B cell (primary cell): ENCODE measurements at regions of chr16 and their contacts with region 1.

Region 1: DNA sequence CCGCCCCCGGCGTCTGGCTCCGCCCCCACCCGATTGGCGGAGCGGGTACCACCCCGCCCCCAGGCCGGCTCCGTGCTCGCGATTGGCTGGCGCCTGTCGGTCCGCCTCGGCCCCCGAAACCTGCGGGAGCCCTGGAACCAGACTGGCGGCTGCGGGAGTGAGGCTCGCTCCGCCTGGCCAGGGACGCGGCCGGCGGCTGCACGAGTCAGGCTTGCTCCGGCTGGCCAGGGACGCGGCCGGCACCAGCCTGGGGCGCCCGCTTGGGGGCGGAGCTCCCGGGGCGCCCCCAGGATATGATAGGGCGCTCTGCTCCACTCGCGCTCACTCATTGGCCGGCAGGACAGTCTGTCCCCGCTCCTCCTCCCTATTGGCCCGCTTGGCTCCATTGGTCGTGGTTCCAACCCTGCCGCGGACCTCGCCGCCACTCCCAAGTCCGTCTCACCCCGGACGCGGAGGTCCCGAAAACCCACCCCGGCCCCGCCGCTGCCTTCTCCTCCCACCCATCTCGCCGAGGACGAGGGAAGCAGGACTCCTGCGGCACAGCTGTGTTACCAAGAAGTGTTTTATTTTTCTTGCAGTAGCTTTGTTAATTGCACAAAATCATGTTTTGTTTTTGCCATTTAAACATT is 340 bp upstream of the ROGDI start:
- DNase-seq: peak; percentile 95
- ATAC-seq: peak; percentile 86
- H3K4me3 ChIP-seq: peak overlapping the region; percentile 13 to 88 (median 75)
- H3K4me3 Mint-ChIP-seq: peak overlapping the region; percentile 88
- H3K27ac ChIP-seq: peak overlapping the region; percentile 47 to 77
- H3K27ac Mint-ChIP-seq: peak overlapping the region; percentile 84
- H3K4me1 ChIP-seq: peaks cover 26 to 27% of the 10 kb centered on the region in 2 donors
- H3K4me1 Mint-ChIP-seq: peaks cover 21% of the 10 kb centered on the region
- H3K27me3 ChIP-seq: no peaks in the 10 kb centered on the region
- H3K27me3 Mint-ChIP-seq: no peaks in the 10 kb centered on the region
- CTCF ChIP-seq: no peak

Region 2: DNA sequence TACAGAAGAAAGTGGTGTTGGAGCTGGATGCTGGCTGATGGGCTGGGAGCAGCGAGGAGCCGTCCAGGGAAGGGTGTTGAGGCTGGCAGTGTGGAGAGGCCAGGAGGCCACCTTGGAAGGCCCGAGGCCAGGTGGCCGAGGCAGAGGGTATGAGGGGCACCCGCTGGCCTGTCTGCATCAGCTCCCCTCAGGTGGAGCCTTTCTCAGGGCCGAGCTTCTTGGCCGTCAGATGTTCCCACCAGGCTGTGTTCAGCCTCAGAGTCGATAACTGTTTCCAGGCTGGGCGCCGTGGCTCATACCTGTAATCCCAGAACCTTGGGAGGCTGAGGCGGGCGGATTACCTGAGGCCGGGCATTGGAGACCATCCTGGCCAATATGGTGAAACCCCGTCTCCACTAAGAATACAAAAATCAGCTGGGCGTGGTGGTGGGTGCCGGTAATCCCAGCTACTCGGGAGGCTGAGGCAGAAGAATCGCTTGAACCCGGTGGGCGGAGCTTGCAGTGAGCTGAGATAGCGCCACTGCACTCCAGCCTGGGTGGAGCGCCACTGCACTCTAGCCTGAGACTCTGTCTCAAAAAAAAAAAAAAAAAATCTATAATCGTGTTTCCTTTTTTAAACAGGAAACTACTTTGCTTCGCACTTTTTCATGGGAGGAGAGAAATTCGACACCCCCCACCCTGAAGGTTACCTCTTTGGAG is 152.9 kb before region 1 on chr16:
- CTCF ChIA-PET with region 1: no interaction called
- POLR2A ChIA-PET with region 1: no interaction called
- intact Hi-C with region 1: no loop called
- DNase-seq: no peak
- ATAC-seq: no peak
- H3K4me3 ChIP-seq: no peak overlapping the region
- H3K4me3 Mint-ChIP-seq: no peak overlapping the region
- H3K27ac ChIP-seq: no peak overlapping the region
- H3K27ac Mint-ChIP-seq: no peak overlapping the region
- H3K4me1 ChIP-seq: peaks cover 0 to 20% of the 10 kb centered on the region in 2 donors
- H3K4me1 Mint-ChIP-seq: peaks cover 23% of the 10 kb centered on the region
- H3K27me3 ChIP-seq: no peaks in the 10 kb centered on the region
- H3K27me3 Mint-ChIP-seq: no peaks in the 10 kb centered on the region
- CTCF ChIP-seq: no peak

Region 3: GRCh38 chr16:4693296-4693955 is 109.3 kb before region 1 on chr16 and contains the start of gene NUDT16L1:
- CTCF ChIA-PET with region 1: no interaction called
- POLR2A ChIA-PET with region 1: no interaction called
- intact Hi-C with region 1: loop called (anchors 1 kb)
- DNase-seq: peak; percentile 97
- ATAC-seq: peak; percentile 95
- H3K4me3 ChIP-seq: peak within 1 kb of the TSS; percentile 50 to 85 (median 81)
- H3K4me3 Mint-ChIP-seq: peak within 1 kb of the TSS; percentile 91
- H3K27ac ChIP-seq: peak within 1 kb of the TSS; percentile 34 to 87
- H3K27ac Mint-ChIP-seq: peak within 1 kb of the TSS; percentile 90
- H3K4me1 ChIP-seq: peaks cover 15 to 19% of the 10 kb centered on the region in 2 donors
- H3K4me1 Mint-ChIP-seq: peaks cover 22% of the 10 kb centered on the region
- H3K27me3 ChIP-seq: no peaks in the 10 kb centered on the region
- H3K27me3 Mint-ChIP-seq: no peaks in the 10 kb centered on the region
- CTCF ChIP-seq: no peak
- total RNA-seq, gene NUDT16L1: 38.5 and 43.2 TPM in 2 replicates

Region 4: DNA sequence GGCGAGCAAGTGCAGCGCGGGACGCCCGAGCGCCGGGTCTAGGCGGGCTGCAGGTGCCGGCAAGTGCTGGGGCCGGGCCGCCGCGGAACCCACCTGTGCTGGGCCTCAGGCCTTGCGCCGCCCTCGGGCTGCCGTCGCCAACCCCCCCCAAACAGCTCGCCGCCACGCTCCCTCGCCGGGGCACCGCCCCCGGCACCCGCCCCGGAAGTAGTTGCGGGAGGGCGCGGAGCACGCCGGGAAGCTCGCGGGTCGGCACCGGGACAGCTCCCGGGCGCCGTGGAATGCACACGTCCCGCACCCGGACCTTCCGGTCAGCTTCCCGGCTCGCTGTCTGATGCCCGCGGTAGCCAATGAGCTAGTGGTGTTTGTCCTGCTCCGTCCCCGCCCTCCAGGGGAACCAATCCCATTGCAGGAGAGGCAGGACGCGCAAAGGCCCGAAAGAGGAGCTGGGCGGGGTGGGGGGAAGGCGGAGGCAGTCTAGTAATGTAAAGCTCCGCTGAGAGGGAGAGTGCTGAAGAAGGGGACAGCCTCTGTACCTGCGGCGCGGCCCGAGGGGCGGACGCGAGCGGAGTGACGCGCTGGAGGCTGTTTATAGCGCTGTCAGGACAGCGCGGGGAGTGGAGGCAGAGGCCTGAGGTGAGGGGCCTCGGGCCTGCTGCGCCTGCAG is 68.6 kb before region 1 on chr16 and contains the starts of genes ANKS3 and DNAAF8:
- CTCF ChIA-PET with region 1: interaction called, 3 read pairs
- POLR2A ChIA-PET with region 1: interaction called, 20 read pairs
- intact Hi-C with region 1: loop called (anchors 1 kb)
- DNase-seq: peak; percentile 89
- ATAC-seq: peak; percentile 80
- H3K4me3 ChIP-seq: peak within 1 kb of the TSS; percentile 79 to 98 (median 91)
- H3K4me3 Mint-ChIP-seq: peak within 1 kb of the TSS; percentile 90
- H3K27ac ChIP-seq: peak within 1 kb of the TSS; percentile 35 to 89
- H3K27ac Mint-ChIP-seq: peak within 1 kb of the TSS; percentile 89
- H3K4me1 ChIP-seq: peaks cover 10 to 13% of the 10 kb centered on the region in 2 donors
- H3K4me1 Mint-ChIP-seq: peaks cover 17% of the 10 kb centered on the region
- H3K27me3 ChIP-seq: no peaks in the 10 kb centered on the region
- H3K27me3 Mint-ChIP-seq: no peaks in the 10 kb centered on the region
- CTCF ChIP-seq: no peak
- total RNA-seq, gene ANKS3: 31.9 and 36.2 TPM in 2 replicates
- total RNA-seq, gene DNAAF8: 0.19 and 0.44 TPM in 2 replicates

Region 5: GRCh38 chr16:4746991-4747574 is 55.7 kb before region 1 on chr16:
- CTCF ChIA-PET with region 1: no interaction called
- POLR2A ChIA-PET with region 1: no interaction called
- intact Hi-C with region 1: no loop called
- DNase-seq: no peak
- ATAC-seq: no peak
- H3K4me3 ChIP-seq: no peak overlapping the region
- H3K4me3 Mint-ChIP-seq: no peak overlapping the region
- H3K27ac ChIP-seq: no peak overlapping the region
- H3K27ac Mint-ChIP-seq: no peak overlapping the region
- H3K4me1 ChIP-seq: peaks cover 0 to 23% of the 10 kb centered on the region in 2 donors
- H3K4me1 Mint-ChIP-seq: peaks cover 29% of the 10 kb centered on the region
- H3K27me3 ChIP-seq: peaks cover 0 to 5% (median 2%) of the 10 kb centered on the region in 4 experiments
- H3K27me3 Mint-ChIP-seq: peaks cover 4% of the 10 kb centered on the region
- CTCF ChIP-seq: no peak

Region 6: GRCh38 chr16:4766874-4767628 is 35.7 kb before region 1 on chr16 and contains the start of gene ZNF500:
- CTCF ChIA-PET with region 1: interaction called, 3 read pairs
- POLR2A ChIA-PET with region 1: interaction called, 7 read pairs
- intact Hi-C with region 1: loop called (anchors 1 kb)
- DNase-seq: peak; percentile 95
- ATAC-seq: peak; percentile 91
- H3K4me3 ChIP-seq: peak within 1 kb of the TSS; percentile 69 to 94 (median 87)
- H3K4me3 Mint-ChIP-seq: peak within 1 kb of the TSS; percentile 98
- H3K27ac ChIP-seq: peak within 1 kb of the TSS in 1 of 2 donors; percentile 80
- H3K27ac Mint-ChIP-seq: peak within 1 kb of the TSS; percentile 95
- H3K4me1 ChIP-seq: peaks cover 15 to 33% of the 10 kb centered on the region in 2 donors
- H3K4me1 Mint-ChIP-seq: peaks cover 31% of the 10 kb centered on the region
- H3K27me3 ChIP-seq: no peaks in the 10 kb centered on the region
- H3K27me3 Mint-ChIP-seq: no peaks in the 10 kb centered on the region
- CTCF ChIP-seq: no peak
- total RNA-seq, gene ZNF500: 26.5 and 35.7 TPM in 2 replicates

Region 7: DNA sequence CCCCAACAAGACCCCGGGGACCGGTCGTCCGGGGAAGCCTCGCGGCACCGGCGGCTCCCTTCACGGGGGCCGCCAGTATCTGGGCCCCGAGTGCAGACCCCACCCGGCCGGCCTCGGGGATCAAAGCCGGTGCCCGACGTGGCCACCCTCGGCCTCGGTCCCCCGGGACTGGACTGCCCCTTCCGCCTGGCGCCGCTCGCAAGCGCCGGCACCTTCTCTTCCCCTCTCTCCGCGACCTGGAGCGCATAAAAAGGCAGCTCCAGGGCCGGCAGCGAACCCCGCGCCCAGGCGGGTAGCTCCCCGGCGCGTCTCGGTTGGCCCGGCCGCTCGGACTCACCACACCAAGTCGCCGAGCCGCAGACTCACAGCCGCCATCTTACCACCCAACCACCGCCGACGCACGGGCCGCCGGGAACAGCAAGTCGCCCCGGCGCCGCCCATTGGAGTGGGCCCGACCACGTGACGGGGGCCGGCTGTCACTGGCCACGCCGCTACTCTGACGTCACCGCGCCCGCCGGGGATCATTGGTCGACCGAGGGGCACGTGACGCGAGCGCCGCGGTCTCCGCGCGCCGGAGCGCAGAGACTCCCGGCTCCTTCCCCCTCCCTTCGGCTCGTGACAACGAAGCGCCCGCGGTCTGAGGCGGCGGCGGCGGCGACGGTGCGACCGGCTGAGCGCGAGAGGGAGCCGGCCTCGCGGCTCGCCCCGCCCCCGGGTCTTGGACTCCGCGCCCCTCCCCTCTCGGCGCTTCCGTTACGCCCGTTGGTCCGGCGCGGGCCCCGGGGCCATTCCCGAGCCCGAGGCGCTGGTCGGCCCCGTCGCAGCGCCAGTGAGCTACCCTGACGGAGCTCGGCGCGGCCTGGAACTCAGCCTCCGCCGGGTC is 44.4 kb after region 1 on chr16 and contains the starts of genes GLYR1 and UBN1:
- CTCF ChIA-PET with region 1: no interaction called
- POLR2A ChIA-PET with region 1: interaction called, 6 read pairs
- intact Hi-C with region 1: loop called (anchors 1 kb)
- DNase-seq: peak; percentile 99
- ATAC-seq: peak; percentile 86
- H3K4me3 ChIP-seq: peak within 1 kb of the TSS; percentile 69 to 96 (median 87)
- H3K4me3 Mint-ChIP-seq: peak within 1 kb of the TSS; percentile 93
- H3K27ac ChIP-seq: peak within 1 kb of the TSS; percentile 80 to 97
- H3K27ac Mint-ChIP-seq: peak within 1 kb of the TSS; percentile 96
- H3K4me1 ChIP-seq: peaks cover 27 to 31% of the 10 kb centered on the region in 2 donors
- H3K4me1 Mint-ChIP-seq: peaks cover 34% of the 10 kb centered on the region
- H3K27me3 ChIP-seq: no peaks in the 10 kb centered on the region
- H3K27me3 Mint-ChIP-seq: no peaks in the 10 kb centered on the region
- CTCF ChIP-seq: no peak
- total RNA-seq, gene GLYR1: 137 and 147 TPM in 2 replicates
- total RNA-seq, gene UBN1: 38.1 and 41.9 TPM in 2 replicates

Region 8: GRCh38 chr16:5033256-5034169 is 230.7 kb after region 1 on chr16 and contains the start of gene NAGPA:
- CTCF ChIA-PET with region 1: no interaction called
- POLR2A ChIA-PET with region 1: no interaction called
- intact Hi-C with region 1: loop called (anchors 2 kb)
- DNase-seq: peak; percentile 91
- ATAC-seq: peak; percentile 85
- H3K4me3 ChIP-seq: peak within 1 kb of the TSS; percentile 66 to 82 (median 75)
- H3K4me3 Mint-ChIP-seq: peak within 1 kb of the TSS; percentile 93
- H3K27ac ChIP-seq: peak within 1 kb of the TSS; percentile 73 to 79
- H3K27ac Mint-ChIP-seq: peak within 1 kb of the TSS; percentile 95
- H3K4me1 ChIP-seq: peaks cover 14 to 17% of the 10 kb centered on the region in 2 donors
- H3K4me1 Mint-ChIP-seq: peaks cover 20% of the 10 kb centered on the region
- H3K27me3 ChIP-seq: no peaks in the 10 kb centered on the region
- H3K27me3 Mint-ChIP-seq: no peaks in the 10 kb centered on the region
- CTCF ChIP-seq: no peak
- total RNA-seq, gene NAGPA: 38.4 and 43.3 TPM in 2 replicates

Region 9: GRCh38 chr16:5071681-5072333 is 269.0 kb after region 1 on chr16 and contains the start of gene ALG1:
- CTCF ChIA-PET with region 1: no interaction called
- POLR2A ChIA-PET with region 1: no interaction called
- intact Hi-C with region 1: loop called (anchors 5 kb)
- DNase-seq: peak; percentile 93
- ATAC-seq: peak; percentile 87
- H3K4me3 ChIP-seq: peak within 1 kb of the TSS; percentile 50 to 87 (median 74)
- H3K4me3 Mint-ChIP-seq: peak within 1 kb of the TSS; percentile 98
- H3K27ac ChIP-seq: peak within 1 kb of the TSS; percentile 81 to 90
- H3K27ac Mint-ChIP-seq: peak within 1 kb of the TSS; percentile 99
- H3K4me1 ChIP-seq: peaks cover 14 to 18% of the 10 kb centered on the region in 2 donors
- H3K4me1 Mint-ChIP-seq: peaks cover 27% of the 10 kb centered on the region
- H3K27me3 ChIP-seq: no peaks in the 10 kb centered on the region
- H3K27me3 Mint-ChIP-seq: peaks cover 3% of the 10 kb centered on the region
- CTCF ChIP-seq: no peak
- total RNA-seq, gene ALG1: 24.2 and 26.3 TPM in 2 replicates